Activated CD4-positive, alpha-beta memory T cell treated with anti-CD3 and anti-CD28 coated beads for 36 hours (primary cell): ENCODE measurements at regions of chr1 and their contacts with region 1.

Region 1: GRCh38 chr1:235642011-235642942 is 7.3 kb downstream of the GNG4 start:
- DNase-seq: peak; percentile 89
- H3K4me3 Mint-ChIP-seq: peak overlapping the region; percentile 71
- H3K27ac Mint-ChIP-seq: peak overlapping the region; percentile 85
- H3K4me1 Mint-ChIP-seq: peaks cover 32% of the 10 kb centered on the region
- H3K27me3 Mint-ChIP-seq: peaks cover 17% of the 10 kb centered on the region

Region 2: GRCh38 chr1:235583511-235584001 is 58.7 kb before region 1 on chr1:
- CTCF ChIA-PET with region 1: no interaction called
- POLR2A ChIA-PET with region 1: no interaction called
- intact Hi-C with region 1: no loop called
- DNase-seq: no peak
- H3K4me3 Mint-ChIP-seq: no peak overlapping the region
- H3K27ac Mint-ChIP-seq: no peak overlapping the region
- H3K4me1 Mint-ChIP-seq: no peaks in the 10 kb centered on the region
- H3K27me3 Mint-ChIP-seq: peaks cover 11% of the 10 kb centered on the region

Region 3: DNA sequence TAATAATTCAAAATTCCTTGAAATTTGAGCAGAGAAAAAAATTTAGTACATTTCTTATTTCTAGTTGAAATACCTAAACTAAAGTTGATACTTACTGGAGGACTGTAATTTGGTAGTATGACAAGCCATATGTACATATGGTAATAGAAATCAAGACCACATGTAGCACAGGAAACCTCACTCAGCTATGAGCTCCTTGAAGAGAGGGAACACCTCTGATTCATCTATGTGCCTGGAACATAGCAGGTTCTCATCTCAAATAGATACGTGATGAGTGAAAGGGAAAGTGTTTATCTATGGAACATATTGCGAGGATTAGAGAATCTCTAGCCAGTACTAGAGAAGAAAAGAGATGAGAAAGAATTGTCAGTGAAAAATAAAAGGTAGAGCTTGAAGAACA is 55.2 kb after region 1 on chr1:
- CTCF ChIA-PET with region 1: no interaction called
- POLR2A ChIA-PET with region 1: interaction called, 3 read pairs
- intact Hi-C with region 1: loop called (anchors 2 kb)
- DNase-seq: no peak
- H3K4me3 Mint-ChIP-seq: no peak overlapping the region
- H3K27ac Mint-ChIP-seq: peak overlapping the region; percentile 58
- H3K4me1 Mint-ChIP-seq: peaks cover 16% of the 10 kb centered on the region
- H3K27me3 Mint-ChIP-seq: no peaks in the 10 kb centered on the region